ENCODE measurements at regions of chrX and their contacts with region 1.

Region 1: GRCh38 chrX:94831364-94831763 is 1157.4 kb downstream of the FAM133A start:
- DNase-seq: peak in 1 of 2 experiments; percentile 1
- H3K4me3 ChIP-seq: no peak overlapping the region
- H3K4me3 Mint-ChIP-seq: no peak overlapping the region
- H3K27ac Mint-ChIP-seq: no peak overlapping the region
- H3K4me1 ChIP-seq: no peaks in the 10 kb centered on the region
- H3K4me1 Mint-ChIP-seq: no peaks in the 10 kb centered on the region
- H3K27me3 ChIP-seq: no peaks in the 10 kb centered on the region
- H3K27me3 Mint-ChIP-seq: no peaks in the 10 kb centered on the region
- CTCF ChIP-seq: peak in 1 of 2 experiments; percentile 16

Region 2: DNA sequence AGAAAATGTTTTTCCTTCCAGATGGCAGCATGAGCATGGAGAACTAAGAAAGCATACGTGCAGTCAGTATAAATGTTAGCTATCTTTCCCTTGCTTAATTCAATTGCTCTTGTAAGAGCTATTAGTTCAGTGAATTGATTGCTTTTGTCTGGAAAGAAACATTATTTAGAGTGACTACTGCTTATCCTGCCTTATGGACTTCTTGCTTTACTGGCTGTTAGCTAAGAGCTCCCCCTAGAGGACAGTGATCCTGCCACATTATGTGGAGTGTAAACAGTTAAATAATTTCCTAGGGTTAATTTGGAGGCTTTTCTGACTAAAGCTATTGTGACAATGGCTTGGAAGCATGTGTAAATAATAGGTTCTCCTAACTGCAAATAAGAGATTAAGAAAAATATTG is 245.1 kb after region 1 on chrX:
- CTCF ChIA-PET with region 1: no interaction called
- POLR2A ChIA-PET with region 1: no interaction called
- intact Hi-C with region 1: loop called (anchors 1 kb)
- DNase-seq: peak in 1 of 2 experiments; percentile 34
- H3K4me3 ChIP-seq: no peak overlapping the region
- H3K4me3 Mint-ChIP-seq: no peak overlapping the region
- H3K27ac Mint-ChIP-seq: no peak overlapping the region
- H3K4me1 ChIP-seq: no peaks in the 10 kb centered on the region
- H3K4me1 Mint-ChIP-seq: no peaks in the 10 kb centered on the region
- H3K27me3 ChIP-seq: no peaks in the 10 kb centered on the region
- H3K27me3 Mint-ChIP-seq: no peaks in the 10 kb centered on the region
- CTCF ChIP-seq: peak; percentile 22 to 27

Region 3: DNA sequence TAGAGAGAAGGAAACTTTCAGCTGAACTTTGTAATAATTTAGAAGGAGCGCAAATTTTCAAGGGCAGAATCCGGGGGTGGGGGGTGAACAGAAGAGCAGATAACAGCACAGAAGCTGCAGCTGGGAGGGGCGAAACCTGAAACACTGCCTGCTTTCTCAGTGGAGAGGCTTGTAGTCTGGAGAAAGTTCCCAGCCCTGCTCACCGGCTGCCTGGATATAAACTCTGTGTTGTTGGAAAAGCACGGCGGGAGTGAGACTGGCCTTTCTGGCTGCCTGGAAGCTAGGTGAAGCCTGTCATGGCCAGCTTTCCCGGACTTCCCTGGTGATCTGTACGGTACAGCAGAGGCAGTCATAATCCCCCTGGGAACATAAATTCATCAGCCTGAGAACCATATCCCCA is 501.2 kb after region 1 on chrX:
- CTCF ChIA-PET with region 1: no interaction called
- POLR2A ChIA-PET with region 1: no interaction called
- intact Hi-C with region 1: loop called (anchors 10 kb)
- DNase-seq: no peak
- H3K4me3 ChIP-seq: no peak overlapping the region
- H3K4me3 Mint-ChIP-seq: no peak overlapping the region
- H3K27ac Mint-ChIP-seq: no peak overlapping the region
- H3K4me1 ChIP-seq: no peaks in the 10 kb centered on the region
- H3K4me1 Mint-ChIP-seq: no peaks in the 10 kb centered on the region
- H3K27me3 ChIP-seq: no peaks in the 10 kb centered on the region
- H3K27me3 Mint-ChIP-seq: no peaks in the 10 kb centered on the region
- CTCF ChIP-seq: no peak

Measured in Caco-2 (cell line).